Common myeloid progenitor, CD34-positive (primary cell): ENCODE measurements at regions of chr12 and their contacts with region 1.

Region 1: GRCh38 chr12:116247377-116247776 is 30.1 kb downstream of the MED13L start:
- DNase-seq: no peak
- H3K4me3 ChIP-seq: no peak overlapping the region
- H3K27ac ChIP-seq: no peak overlapping the region
- H3K4me1 ChIP-seq: peaks cover 9 to 38% (median 28%) of the 10 kb centered on the region in 4 experiments
- H3K27me3 ChIP-seq: no peaks in the 10 kb centered on the region

Region 2: DNA sequence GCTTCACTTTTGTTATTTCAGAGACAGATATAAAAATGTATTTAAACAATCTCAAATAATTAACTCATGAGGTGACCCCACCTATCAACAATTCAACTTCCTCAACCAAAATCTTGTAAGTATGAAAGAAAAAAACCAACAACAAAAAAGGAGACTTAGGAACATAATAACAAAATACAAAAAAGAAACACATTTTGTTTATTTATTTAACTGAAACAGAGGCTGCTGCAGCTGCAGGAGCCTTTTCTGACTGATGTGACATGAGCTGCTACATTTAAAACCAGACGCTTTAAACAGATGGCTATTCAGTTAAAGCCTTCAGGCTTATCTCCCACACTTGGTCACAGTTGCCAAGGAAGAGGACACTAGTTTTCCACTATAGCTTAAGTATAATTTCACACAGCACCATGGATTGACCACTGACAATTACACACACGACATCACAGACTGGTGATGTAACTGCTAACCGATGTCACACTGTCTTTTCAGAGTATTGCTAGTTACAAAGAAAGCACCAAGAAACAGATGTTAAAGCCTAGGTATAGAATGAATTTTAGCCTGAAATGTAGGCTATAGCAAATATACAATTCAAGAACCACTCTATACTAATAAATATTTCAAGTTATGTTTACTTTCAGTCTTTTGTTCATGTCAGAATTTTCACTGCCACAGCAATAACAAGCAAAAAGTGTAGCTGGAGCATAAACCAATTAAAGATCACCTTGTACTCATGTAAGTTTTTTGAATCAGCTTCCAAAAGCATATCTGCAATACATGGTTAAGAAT is 82.9 kb before region 1 on chr12:
- CTCF ChIA-PET with region 1: no interaction called
- POLR2A ChIA-PET with region 1: no interaction called
- DNase-seq: peak in 2 of 3 donors; percentile 54 to 72
- H3K4me3 ChIP-seq: no peak overlapping the region
- H3K27ac ChIP-seq: peak overlapping the region in 1 of 2 experiments; percentile 57
- H3K4me1 ChIP-seq: peaks cover 6 to 13% (median 12%) of the 10 kb centered on the region in 4 experiments
- H3K27me3 ChIP-seq: no peaks in the 10 kb centered on the region

Region 3: GRCh38 chr12:116207274-116207673 is 40.1 kb before region 1 on chr12:
- CTCF ChIA-PET with region 1: no interaction called
- POLR2A ChIA-PET with region 1: no interaction called
- DNase-seq: no peak
- H3K4me3 ChIP-seq: no peak overlapping the region
- H3K27ac ChIP-seq: no peak overlapping the region
- H3K4me1 ChIP-seq: peaks cover 0 to 14% (median 6%) of the 10 kb centered on the region in 4 experiments
- H3K27me3 ChIP-seq: no peaks in the 10 kb centered on the region

Region 4: GRCh38 chr12:116266168-116266601 is 18.8 kb after region 1 on chr12:
- CTCF ChIA-PET with region 1: interaction called, 15 read pairs
- POLR2A ChIA-PET with region 1: no interaction called
- DNase-seq: no peak
- H3K4me3 ChIP-seq: peak overlapping the region in 1 of 7 experiments; percentile 28
- H3K27ac ChIP-seq: peak overlapping the region in 1 of 2 experiments; percentile 36
- H3K4me1 ChIP-seq: peaks cover 28 to 61% (median 45%) of the 10 kb centered on the region in 4 experiments
- H3K27me3 ChIP-seq: no peaks in the 10 kb centered on the region

Region 5: DNA sequence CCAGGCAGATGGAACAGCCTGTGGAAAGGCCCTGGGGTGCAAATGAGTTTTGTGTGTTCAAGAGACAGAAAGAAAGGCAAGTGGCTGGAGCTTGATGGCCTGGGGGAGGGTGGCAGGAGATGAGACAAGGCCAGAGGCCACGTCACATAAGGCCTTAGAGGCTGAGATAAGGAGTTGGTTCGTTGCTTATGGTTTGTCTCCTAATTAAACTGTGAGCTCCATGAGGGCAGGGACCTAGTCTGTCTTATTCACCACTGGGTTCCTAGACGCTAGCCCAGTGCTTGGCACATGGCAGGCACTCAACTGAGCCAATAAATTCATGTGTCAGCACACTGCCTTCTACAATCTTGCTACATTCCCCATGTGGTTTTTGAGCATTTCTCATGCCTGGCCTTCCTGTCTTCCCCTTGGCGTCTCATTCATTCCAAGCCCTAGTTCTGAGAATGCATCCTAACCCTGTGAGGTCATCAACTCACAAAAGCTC is 122.6 kb after region 1 on chr12:
- CTCF ChIA-PET with region 1: no interaction called
- POLR2A ChIA-PET with region 1: no interaction called
- DNase-seq: no peak
- H3K4me3 ChIP-seq: no peak overlapping the region
- H3K27ac ChIP-seq: no peak overlapping the region
- H3K4me1 ChIP-seq: peaks cover 0 to 10% (median 4%) of the 10 kb centered on the region in 4 experiments
- H3K27me3 ChIP-seq: no peaks in the 10 kb centered on the region